Activated B cell treated with CpG ODN at 0.5 μM for 24 hours (primary cell): ENCODE measurements at regions of chr6 and their contacts with region 1.

Region 1: DNA sequence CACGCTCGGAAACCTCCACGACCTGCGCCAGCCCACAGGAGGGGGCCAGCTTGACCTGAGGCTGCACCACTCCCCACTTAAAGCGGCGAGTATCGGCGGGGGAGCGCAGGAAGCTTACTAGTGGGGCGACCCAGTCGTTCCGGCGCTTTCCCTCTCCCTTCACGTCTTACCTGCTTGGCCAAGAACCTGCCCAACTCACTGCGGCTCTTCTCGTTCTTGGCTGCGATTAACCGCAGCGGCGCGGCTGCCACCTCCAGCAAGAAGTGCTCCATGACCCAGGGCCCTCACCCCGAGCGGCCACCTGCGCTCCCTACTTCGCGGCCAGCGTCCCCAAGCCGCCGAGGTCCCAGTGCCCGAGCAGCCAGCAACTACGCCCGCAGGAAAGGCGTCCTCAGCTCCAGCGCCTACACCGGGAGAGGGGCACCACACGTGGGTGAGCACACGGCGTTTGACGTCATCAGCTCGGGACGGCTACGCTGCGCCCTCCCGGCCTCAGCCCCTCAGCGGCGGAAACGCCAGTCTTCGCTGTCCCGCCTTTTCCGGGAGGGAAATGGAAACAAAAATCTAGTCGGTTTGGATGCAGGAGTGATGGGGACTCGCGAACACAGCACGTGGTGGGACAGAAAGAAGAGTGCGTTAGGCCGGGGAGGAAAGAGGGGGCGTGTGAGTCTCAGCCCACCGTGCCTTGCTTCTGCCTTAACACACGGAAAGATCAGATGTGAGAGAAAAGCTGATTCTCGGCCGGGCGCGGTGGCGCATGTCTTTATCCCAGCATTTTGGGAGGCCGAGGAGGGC is at the start of gene MDN1:
- DNase-seq: peak; percentile 76
- ATAC-seq: peak; percentile 94
- H3K4me3 Mint-ChIP-seq: peak within 1 kb of the TSS; percentile 95
- H3K27ac Mint-ChIP-seq: peak within 1 kb of the TSS; percentile 95
- H3K4me1 Mint-ChIP-seq: peaks cover 33% of the 10 kb centered on the region
- H3K27me3 Mint-ChIP-seq: no peaks in the 10 kb centered on the region
- CTCF ChIP-seq: no peak
- total RNA-seq, gene MDN1: 59.8 and 65.4 TPM in 2 replicates

Region 2: DNA sequence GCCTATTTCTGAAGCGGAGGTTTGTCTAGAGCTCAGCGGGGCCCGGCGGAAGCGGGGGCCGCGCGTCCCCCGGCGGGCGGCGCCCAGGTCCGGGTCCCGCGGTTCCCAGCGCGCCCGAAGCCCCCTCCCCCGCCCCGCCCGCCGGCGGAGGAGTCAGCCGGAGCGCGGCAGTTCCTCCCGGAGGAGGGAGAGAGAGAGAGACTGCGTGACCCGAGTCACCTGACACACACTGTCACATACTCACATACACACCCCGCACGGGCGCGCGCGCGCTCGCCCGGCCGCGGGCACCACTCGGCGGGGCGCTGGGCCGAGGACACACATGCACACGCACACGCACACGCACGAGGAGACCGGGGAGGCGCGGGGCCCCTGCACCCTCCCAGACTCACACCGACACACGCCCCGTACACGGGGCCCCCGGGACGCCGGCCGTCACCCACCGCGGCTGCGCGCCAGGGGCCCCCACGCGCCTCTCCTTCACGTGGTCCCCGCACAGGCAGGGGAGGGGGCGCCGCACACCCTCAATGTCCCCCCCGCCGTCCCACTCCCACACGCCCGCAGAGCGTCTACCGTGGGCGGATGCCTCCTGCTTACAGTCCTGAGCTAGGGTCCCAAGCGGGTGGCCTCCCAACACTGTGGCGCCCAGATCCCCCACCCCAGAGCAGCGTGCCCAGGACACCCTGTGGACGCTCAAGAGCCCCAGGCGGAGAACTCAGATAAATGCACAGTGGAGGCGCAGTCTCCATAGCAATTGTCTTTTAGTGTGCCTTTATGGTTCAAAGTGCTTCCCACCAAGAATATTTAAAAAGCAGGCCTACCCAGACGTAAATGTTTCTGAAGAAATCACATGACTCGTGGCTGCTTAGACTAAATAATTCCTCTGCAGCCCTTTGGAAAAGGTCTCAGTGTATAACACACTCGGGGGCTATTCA is 407.2 kb before region 1 on chr6 and contains the start of gene RRAGD:
- CTCF ChIA-PET with region 1: no interaction called
- POLR2A ChIA-PET with region 1: no interaction called
- intact Hi-C with region 1: loop called (anchors 10 kb)
- DNase-seq: peak; percentile 56
- ATAC-seq: peak; percentile 72
- H3K4me3 Mint-ChIP-seq: peak within 1 kb of the TSS; percentile 92
- H3K27ac Mint-ChIP-seq: peak within 1 kb of the TSS; percentile 56
- H3K4me1 Mint-ChIP-seq: peaks cover 21% of the 10 kb centered on the region
- H3K27me3 Mint-ChIP-seq: peaks cover 14% of the 10 kb centered on the region
- CTCF ChIP-seq: no peak
- total RNA-seq, gene RRAGD: 5.4 and 5.6 TPM in 2 replicates

Region 3: GRCh38 chr6:89644873-89645272 is 174.7 kb before region 1 on chr6:
- CTCF ChIA-PET with region 1: no interaction called
- POLR2A ChIA-PET with region 1: no interaction called
- intact Hi-C with region 1: no loop called
- DNase-seq: no peak
- ATAC-seq: no peak
- H3K4me3 Mint-ChIP-seq: no peak overlapping the region
- H3K27ac Mint-ChIP-seq: no peak overlapping the region
- H3K4me1 Mint-ChIP-seq: no peaks in the 10 kb centered on the region
- H3K27me3 Mint-ChIP-seq: no peaks in the 10 kb centered on the region
- CTCF ChIP-seq: no peak

Region 4: GRCh38 chr6:89834884-89835792 is 15.6 kb after region 1 on chr6:
- CTCF ChIA-PET with region 1: no interaction called
- POLR2A ChIA-PET with region 1: interaction called, 87 read pairs
- intact Hi-C with region 1: loop called (anchors 2 kb)
- DNase-seq: no peak
- ATAC-seq: peak; percentile 90
- H3K4me3 Mint-ChIP-seq: peak overlapping the region; percentile 73
- H3K27ac Mint-ChIP-seq: peak overlapping the region; percentile 82
- H3K4me1 Mint-ChIP-seq: peaks cover 61% of the 10 kb centered on the region
- H3K27me3 Mint-ChIP-seq: no peaks in the 10 kb centered on the region
- CTCF ChIP-seq: no peak

Region 5: DNA sequence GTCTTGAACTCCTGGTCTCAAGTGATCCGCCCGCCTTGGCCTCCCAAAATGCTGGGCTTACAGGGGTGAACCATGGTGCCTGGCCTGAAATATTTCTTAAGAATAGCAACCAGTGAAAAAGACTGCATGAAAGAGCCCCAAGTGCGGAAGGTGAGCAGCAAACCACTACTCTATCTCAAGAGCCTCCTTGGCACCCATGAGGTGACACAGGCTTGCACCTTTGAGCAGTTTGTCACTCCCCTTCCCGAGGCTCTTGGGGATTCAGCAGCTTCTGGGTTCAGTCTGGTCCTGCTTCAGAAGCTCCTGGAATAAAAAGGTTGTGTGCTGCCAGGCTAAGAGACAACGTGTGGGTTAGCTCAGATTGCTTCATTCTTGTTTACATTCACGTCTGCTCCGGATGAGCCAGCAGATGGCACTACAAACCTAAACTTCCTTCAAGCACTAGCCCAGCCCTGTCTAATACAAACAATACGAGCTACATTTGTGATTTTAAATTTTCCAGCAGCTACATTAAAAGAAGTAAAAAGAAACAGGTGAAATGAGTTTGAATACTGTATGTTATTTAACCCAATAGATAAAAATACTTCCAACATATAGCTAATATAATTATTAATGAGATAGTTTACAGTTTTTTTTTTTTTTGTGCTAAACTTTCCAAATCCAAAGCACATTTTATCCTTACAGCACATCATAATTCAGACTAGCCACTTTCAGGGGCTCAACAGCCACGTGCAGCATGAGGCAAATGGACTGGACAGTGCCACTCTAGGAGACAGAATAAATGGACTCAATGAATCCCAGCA is 120.9 kb after region 1 on chr6:
- CTCF ChIA-PET with region 1: interaction called, 13 read pairs
- POLR2A ChIA-PET with region 1: interaction called, 8 read pairs
- intact Hi-C with region 1: no loop called
- DNase-seq: no peak
- ATAC-seq: peak; percentile 89
- H3K4me3 Mint-ChIP-seq: no peak overlapping the region
- H3K27ac Mint-ChIP-seq: peak overlapping the region; percentile 59
- H3K4me1 Mint-ChIP-seq: peaks cover 13% of the 10 kb centered on the region
- H3K27me3 Mint-ChIP-seq: no peaks in the 10 kb centered on the region
- CTCF ChIP-seq: peak; percentile 58

Region 6: GRCh38 chr6:90586836-90587638 is 767.5 kb after region 1 on chr6 and contains the start of gene MAP3K7:
- CTCF ChIA-PET with region 1: no interaction called
- POLR2A ChIA-PET with region 1: interaction called, 10 read pairs
- intact Hi-C with region 1: loop called (anchors 1 kb)
- DNase-seq: peak; percentile 91
- ATAC-seq: peak; percentile 86
- H3K4me3 Mint-ChIP-seq: peak within 1 kb of the TSS; percentile 94
- H3K27ac Mint-ChIP-seq: peak within 1 kb of the TSS; percentile 99
- H3K4me1 Mint-ChIP-seq: peaks cover 41% of the 10 kb centered on the region
- H3K27me3 Mint-ChIP-seq: peaks cover 7% of the 10 kb centered on the region
- CTCF ChIP-seq: no peak
- total RNA-seq, gene MAP3K7: 23.8 and 27.2 TPM in 2 replicates